ENCODE measurements at regions of chr7 and their contacts with region 1.

Region 1: GRCh38 chr7:116258734-116259133 is 48.4 kb downstream of the TES start:
- DNase-seq: no peak
- ATAC-seq: peak; percentile 60
- H3K4me3 Mint-ChIP-seq: no peak overlapping the region
- H3K27ac Mint-ChIP-seq: no peak overlapping the region
- H3K4me1 Mint-ChIP-seq: peaks cover 12% of the 10 kb centered on the region
- H3K27me3 Mint-ChIP-seq: no peaks in the 10 kb centered on the region
- CTCF ChIP-seq: peak; percentile 63

Region 2: DNA sequence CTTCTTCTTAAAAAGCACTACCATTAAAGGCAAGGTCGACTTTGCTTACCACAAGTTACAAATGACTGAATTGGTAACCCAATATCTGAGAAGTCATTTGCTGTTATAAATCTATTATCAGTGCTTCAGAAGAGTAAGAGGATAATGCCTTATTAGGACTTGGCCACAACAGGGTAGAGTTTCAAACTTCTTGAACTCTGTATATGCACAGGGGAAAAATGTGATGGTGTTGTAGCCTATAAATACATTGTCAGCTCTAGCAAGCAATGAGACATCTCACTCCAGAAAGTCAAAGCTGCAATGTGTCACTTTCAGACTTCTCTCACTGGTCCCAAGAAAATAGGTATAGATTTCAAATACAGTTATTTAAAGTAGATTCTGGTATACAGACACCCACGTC is 237.5 kb before region 1 on chr7:
- CTCF ChIA-PET with region 1: no interaction called
- POLR2A ChIA-PET with region 1: interaction called, 14 read pairs
- intact Hi-C with region 1: no loop called
- DNase-seq: no peak
- ATAC-seq: no peak
- H3K4me3 Mint-ChIP-seq: no peak overlapping the region
- H3K27ac Mint-ChIP-seq: no peak overlapping the region
- H3K4me1 Mint-ChIP-seq: peaks cover 23% of the 10 kb centered on the region
- H3K27me3 Mint-ChIP-seq: no peaks in the 10 kb centered on the region
- CTCF ChIP-seq: no peak

Region 3: GRCh38 chr7:116340943-116341907 is 82.5 kb after region 1 on chr7:
- CTCF ChIA-PET with region 1: no interaction called
- POLR2A ChIA-PET with region 1: no interaction called
- intact Hi-C with region 1: loop called (anchors 1 kb)
- DNase-seq: no peak
- ATAC-seq: no peak
- H3K4me3 Mint-ChIP-seq: no peak overlapping the region
- H3K27ac Mint-ChIP-seq: no peak overlapping the region
- H3K4me1 Mint-ChIP-seq: peaks cover 4% of the 10 kb centered on the region
- H3K27me3 Mint-ChIP-seq: peaks cover 2% of the 10 kb centered on the region
- CTCF ChIP-seq: no peak

Region 4: DNA sequence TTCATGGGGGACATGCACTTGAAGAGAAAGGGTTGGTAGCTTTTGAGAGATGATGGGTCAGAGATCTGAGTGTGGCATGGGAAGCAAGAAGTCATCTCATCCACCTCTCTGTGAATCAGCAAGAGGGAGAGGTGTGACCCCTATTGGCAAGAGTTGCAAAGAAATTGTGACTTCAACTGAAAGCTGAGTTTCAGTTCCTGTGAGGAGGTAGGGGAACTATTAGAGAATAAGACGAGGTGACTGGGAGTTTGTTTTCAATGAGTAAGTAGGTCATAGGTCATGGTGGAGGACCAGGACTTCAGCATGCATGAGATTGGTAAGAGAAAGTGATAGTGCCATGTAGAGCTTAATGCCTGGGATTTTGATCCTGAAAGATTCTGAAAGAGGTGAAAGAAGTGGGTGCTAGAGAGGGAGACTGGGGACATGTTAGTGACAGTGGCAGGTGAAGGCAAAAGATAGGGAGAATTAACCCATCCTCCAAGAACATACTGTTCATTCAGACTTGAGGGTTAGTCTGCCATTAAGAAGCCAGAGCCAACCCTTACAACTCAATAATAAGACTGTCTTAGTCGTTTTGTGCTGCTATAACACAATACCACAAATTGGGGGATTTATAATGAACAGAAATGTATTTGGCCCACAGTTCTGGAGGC is 528.2 kb after region 1 on chr7:
- CTCF ChIA-PET with region 1: interaction called, 4 read pairs
- POLR2A ChIA-PET with region 1: no interaction called
- intact Hi-C with region 1: loop called (anchors 1 kb)
- DNase-seq: no peak
- ATAC-seq: peak; percentile 97
- H3K4me3 Mint-ChIP-seq: no peak overlapping the region
- H3K27ac Mint-ChIP-seq: no peak overlapping the region
- H3K4me1 Mint-ChIP-seq: no peaks in the 10 kb centered on the region
- H3K27me3 Mint-ChIP-seq: peaks cover 2% of the 10 kb centered on the region
- CTCF ChIP-seq: no peak

Region 5: DNA sequence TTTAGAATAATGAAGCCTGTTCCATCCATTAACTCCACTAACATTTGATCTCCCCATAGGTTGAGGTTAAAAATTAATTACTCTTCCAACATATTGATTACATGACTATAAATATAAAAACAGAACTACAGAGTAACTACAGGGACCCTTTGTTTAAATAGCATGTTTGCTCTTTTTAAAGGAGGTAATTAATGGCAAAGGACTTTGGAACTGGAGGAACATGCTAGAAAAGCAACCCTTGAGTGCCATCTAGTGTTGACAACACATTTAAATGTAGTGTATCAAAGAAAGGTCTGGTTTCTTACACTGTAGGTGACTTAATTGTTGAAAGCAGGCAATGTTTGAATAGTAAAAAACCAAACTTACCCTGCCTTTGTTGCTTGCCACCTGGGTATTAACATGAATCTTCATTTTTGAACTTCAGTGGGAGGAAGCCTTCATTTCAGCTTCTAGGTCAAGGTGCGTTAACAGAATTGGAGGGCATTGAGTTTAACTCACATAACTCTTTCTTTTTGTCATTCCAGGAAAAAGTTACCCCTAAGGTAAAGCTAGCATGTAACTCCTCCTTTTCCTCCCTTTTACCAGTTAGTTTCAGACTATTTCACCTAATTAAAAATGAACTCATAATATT is 551.0 kb after region 1 on chr7:
- CTCF ChIA-PET with region 1: interaction called, 3 read pairs
- POLR2A ChIA-PET with region 1: no interaction called
- intact Hi-C with region 1: loop called (anchors 1 kb)
- DNase-seq: no peak
- ATAC-seq: peak; percentile 50
- H3K4me3 Mint-ChIP-seq: no peak overlapping the region
- H3K27ac Mint-ChIP-seq: no peak overlapping the region
- H3K4me1 Mint-ChIP-seq: no peaks in the 10 kb centered on the region
- H3K27me3 Mint-ChIP-seq: peaks cover 9% of the 10 kb centered on the region
- CTCF ChIP-seq: peak; percentile 53